ENCODE measurements at regions of chr13 and their contacts with region 1.

Region 1: GRCh38 chr13:41075034-41075433 is 13.7 kb downstream of the WBP4 start:
- DNase-seq: no peak
- ATAC-seq: peak; percentile 60 to 69 (median 65)
- H3K4me3 ChIP-seq: no peak overlapping the region
- H3K27ac ChIP-seq: no peak overlapping the region
- H3K4me1 ChIP-seq: no peaks in the 10 kb centered on the region
- H3K27me3 ChIP-seq: no peaks in the 10 kb centered on the region
- CTCF ChIP-seq: peak; percentile 53 to 56 (median 54)
- POLR2A ChIP-seq: no peak

Region 2: GRCh38 chr13:40613192-40613818 is 461.7 kb before region 1 on chr13:
- intact Hi-C with region 1: no loop called
- DNase-seq: no peak
- ATAC-seq: peak; percentile 48 to 68 (median 66)
- H3K4me3 ChIP-seq: no peak overlapping the region
- H3K27ac ChIP-seq: peak overlapping the region in 1 of 3 donors; percentile 16
- H3K4me1 ChIP-seq: peaks cover 0 to 42% (median 4%) of the 10 kb centered on the region in 4 donors
- H3K27me3 ChIP-seq: no peaks in the 10 kb centered on the region
- CTCF ChIP-seq: no peak
- POLR2A ChIP-seq: no peak

Region 3: DNA sequence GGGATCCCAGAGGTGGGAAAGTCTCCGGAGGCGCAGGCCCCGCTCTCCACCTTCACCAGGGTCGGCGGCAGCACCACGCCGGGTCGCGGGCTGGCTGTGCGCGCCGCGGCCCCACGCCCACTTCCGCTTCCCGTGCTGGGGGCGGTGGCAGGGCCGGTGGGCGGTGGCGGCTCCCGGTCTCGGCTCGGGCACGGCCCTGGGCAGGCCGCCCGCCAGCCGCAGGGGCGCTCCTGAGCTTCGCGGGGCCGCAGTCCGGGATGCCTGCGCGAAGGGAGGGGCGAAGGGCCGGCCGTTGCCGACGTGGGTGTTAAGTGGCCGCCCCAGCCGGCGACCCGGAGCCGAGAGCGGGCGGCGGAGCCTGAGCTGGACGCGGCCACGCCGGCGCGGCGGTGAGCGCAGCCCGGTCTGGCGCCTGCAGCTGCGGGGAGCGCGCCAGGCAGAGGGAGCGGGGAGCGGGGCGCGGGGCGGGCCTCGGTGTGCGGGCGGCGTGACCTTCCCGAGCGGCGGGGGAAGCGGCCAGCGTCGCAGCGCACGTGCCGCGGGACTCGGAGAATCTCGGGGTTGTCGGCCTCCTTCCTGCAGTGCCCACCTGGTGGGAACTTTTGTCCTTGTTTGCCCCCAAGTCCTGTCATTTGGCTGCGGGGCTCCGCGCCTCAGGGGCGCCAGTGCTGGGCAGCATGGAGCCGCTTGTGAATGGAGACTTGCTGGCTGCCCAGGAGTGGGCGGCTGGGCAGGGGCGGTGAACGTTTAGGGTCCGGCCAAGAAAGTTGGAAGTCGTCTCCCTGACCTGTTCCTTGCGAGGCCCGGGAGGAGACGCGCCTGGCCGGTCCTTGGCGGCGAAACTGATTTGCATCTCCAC is 285.5 kb before region 1 on chr13 and contains the start of gene SLC25A15:
- intact Hi-C with region 1: no loop called
- DNase-seq: peak; percentile 91 to 93 (median 92)
- ATAC-seq: peak; percentile 68 to 85 (median 74)
- H3K4me3 ChIP-seq: peak within 1 kb of the TSS; percentile 64 to 69 (median 66)
- H3K27ac ChIP-seq: peak within 1 kb of the TSS; percentile 94 to 100 (median 100)
- H3K4me1 ChIP-seq: peaks cover 0 to 52% (median 20%) of the 10 kb centered on the region in 4 donors
- H3K27me3 ChIP-seq: no peaks in the 10 kb centered on the region
- CTCF ChIP-seq: peak; percentile 21 to 48 (median 36)
- POLR2A ChIP-seq: peak; percentile 98
- total RNA-seq, gene SLC25A15: 28.0 to 168 (median 79.9) TPM

Region 4: GRCh38 chr13:40910324-40911050 is 164.5 kb before region 1 on chr13:
- intact Hi-C with region 1: no loop called
- DNase-seq: no peak
- ATAC-seq: no peak
- H3K4me3 ChIP-seq: no peak overlapping the region
- H3K27ac ChIP-seq: no peak overlapping the region
- H3K4me1 ChIP-seq: peaks cover 0 to 8% (median 0%) of the 10 kb centered on the region in 4 donors
- H3K27me3 ChIP-seq: no peaks in the 10 kb centered on the region
- CTCF ChIP-seq: no peak
- POLR2A ChIP-seq: no peak

Region 5: GRCh38 chr13:40943073-40943472 is 132.0 kb before region 1 on chr13:
- intact Hi-C with region 1: no loop called
- DNase-seq: no peak
- ATAC-seq: no peak
- H3K4me3 ChIP-seq: no peak overlapping the region
- H3K27ac ChIP-seq: no peak overlapping the region
- H3K4me1 ChIP-seq: no peaks in the 10 kb centered on the region
- H3K27me3 ChIP-seq: no peaks in the 10 kb centered on the region
- CTCF ChIP-seq: no peak
- POLR2A ChIP-seq: no peak

Region 6: DNA sequence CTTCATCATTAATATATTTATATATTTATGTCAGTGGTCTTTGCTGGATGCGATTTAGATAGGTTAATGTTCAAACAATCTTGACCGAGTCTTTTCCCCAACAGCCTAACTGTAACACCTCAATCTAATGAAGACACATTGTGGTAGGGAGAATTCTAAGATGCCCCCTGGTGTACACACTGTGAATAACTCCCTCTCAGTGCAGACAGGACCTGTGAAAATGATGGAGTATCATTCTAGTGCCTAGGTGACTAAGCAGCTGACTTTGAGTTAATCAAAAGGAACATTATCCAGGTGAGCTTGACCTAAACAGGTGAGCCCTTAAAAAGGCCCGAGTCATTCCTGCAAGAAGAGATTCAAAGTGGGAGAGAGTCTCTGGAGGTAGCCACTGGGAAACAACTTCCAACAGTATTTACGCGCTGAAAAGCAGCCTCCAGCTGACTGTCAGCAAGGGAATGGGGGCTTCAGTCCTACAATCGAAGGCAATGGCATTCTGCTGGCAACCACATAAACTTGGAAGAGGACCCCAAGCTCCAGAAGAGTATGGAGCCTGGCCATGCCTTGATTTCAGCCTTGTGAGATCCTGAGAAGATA is 147.3 kb after region 1 on chr13:
- intact Hi-C with region 1: loop called (anchors 10 kb)
- DNase-seq: peak in 1 of 3 donors; percentile 58
- ATAC-seq: peak; percentile 92 to 95 (median 94)
- H3K4me3 ChIP-seq: no peak overlapping the region
- H3K27ac ChIP-seq: no peak overlapping the region
- H3K4me1 ChIP-seq: no peaks in the 10 kb centered on the region
- H3K27me3 ChIP-seq: no peaks in the 10 kb centered on the region
- CTCF ChIP-seq: peak; percentile 71 to 89 (median 76)
- POLR2A ChIP-seq: no peak

Measured in right lobe of liver (tissue), 6 donors.